Posterior vena cava (tissue), 2 donors: ENCODE measurements at regions of chr1 and their contacts with region 1.

Region 1: DNA sequence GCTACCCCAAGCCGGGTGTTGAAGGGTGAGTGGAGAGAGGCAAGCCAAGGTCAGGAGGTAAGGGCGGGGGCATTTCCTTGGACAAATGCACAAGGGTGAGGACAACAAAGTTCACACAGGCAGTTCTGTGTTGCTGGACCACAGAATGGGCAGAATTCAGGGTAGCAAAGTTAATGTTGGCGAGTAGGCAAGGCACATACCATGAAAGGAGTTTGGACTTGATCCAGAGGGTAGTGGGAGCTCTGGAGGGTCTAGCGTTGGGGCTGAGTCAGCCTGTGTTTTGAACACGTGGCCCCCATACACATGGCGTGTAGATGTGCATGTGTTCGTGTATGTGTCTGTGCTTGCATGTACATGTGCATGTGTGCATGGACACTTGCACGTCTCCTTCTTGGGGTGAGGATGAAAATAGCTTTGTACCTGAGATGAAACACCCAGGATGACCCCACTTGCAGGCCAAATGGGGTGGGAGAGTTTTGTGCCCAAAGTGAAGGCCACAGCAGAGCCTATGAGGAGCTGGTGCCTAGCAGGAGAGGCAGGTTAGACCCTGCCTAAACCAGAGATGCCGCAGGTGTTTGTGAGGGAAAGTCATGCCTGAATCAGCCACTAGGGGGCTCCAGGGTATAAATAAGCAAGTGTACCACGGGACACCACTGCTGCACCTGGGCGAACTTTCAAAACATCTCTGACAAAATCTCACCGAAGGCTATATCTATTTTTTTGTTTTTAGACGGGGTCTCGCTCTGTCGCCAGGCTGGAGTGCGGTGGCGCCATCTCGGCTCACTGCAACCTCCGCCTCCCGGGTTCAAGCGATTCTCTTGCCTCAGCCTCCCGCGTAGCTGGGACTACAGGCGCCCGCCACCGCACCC is 21.8 kb downstream of the SLC27A3 start:
- DNase-seq: peak; percentile 86

Region 2: DNA sequence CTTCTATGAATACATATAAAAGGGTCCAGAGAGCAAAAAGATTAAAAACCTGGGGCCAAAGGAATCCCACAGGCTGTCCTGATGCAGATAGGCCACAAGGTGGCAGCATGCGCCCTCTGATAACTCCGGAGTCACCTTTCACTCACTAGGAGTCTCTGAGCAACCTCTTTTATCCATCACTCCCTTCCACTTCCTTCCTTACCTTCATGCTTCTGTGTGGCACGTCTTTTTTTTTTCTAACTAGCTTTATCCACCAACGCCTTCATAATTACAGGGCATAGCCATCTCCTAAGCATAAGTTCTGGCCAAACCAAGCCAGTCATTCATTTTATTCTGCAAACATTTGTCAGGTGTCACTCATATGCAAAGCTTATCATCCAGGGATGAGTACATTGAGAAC is 444.5 kb before region 1 on chr1:
- intact Hi-C with region 1: no loop called
- DNase-seq: peak; percentile 88

Region 3: GRCh38 chr1:153752571-153753195 is 44.3 kb before region 1 on chr1:
- intact Hi-C with region 1: no loop called
- DNase-seq: peak; percentile 91

Region 4: DNA sequence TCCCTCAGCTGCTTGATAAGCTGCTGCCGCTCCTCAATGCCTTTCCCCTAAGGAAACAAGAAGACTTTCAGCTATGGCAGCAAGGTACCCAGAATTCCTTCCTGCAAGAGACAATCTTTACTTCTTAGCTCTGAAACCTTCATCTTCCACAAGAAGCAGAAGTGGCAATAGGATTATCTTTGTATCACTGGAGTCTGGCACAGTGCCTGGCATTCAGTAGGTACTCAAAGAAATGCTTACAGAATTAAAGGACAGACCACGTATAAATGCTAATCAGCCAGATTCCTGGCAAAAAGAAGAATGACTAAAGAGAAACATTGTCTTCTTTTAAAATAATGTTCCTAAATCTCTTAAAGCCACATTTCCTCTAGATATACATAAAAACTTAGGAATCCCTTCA is 21.9 kb after region 1 on chr1:
- intact Hi-C with region 1: no loop called
- DNase-seq: no peak

Region 5: GRCh38 chr1:153946622-153947241 is 149.7 kb after region 1 on chr1 and contains the start of gene DENND4B:
- intact Hi-C with region 1: loop called in 1 of 2 experiments (anchors 10 kb)
- DNase-seq: peak; percentile 95
- total RNA-seq, gene DENND4B: 41.7 to 47.5 TPM

Region 6: DNA sequence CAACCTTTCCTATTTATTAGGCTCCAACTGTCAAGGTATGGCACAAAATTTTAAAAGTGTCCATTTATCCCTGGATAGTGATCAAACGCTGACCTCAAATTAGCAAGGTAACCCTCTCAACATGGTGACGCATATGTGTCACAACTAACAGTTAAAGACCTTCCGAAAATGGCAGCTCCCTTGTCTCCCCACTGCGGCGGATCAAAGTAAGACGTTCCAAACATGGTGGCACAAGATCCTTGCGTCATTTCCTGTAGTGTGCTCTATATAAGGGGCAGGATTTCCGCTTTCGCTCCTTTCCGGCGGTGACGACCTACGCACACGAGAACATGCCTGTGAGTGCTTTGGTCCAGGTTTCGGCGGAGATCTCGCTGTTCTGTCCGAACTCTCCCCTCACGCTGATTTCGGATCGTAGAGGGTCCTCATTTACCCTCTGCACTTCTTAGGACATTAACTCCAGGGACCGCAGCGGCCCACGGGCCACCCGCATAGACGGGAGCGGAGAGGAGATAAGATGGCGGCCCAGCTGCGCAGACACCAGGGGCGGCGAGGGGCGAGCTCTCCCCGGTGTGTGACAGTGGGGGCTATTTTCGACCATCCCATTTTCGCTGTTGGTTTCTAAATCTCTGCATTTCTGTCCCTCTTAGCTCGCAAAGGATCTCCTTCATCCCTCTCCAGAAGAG is 193.6 kb after region 1 on chr1 and contains the start of gene RPS27:
- intact Hi-C with region 1: loop called (anchors 5 to 10 kb)
- DNase-seq: peak; percentile 93
- total RNA-seq, gene RPS27: 1,661 to 1,802 TPM